ENCODE measurements at regions of chr6 and their contacts with region 1.

Region 1: DNA sequence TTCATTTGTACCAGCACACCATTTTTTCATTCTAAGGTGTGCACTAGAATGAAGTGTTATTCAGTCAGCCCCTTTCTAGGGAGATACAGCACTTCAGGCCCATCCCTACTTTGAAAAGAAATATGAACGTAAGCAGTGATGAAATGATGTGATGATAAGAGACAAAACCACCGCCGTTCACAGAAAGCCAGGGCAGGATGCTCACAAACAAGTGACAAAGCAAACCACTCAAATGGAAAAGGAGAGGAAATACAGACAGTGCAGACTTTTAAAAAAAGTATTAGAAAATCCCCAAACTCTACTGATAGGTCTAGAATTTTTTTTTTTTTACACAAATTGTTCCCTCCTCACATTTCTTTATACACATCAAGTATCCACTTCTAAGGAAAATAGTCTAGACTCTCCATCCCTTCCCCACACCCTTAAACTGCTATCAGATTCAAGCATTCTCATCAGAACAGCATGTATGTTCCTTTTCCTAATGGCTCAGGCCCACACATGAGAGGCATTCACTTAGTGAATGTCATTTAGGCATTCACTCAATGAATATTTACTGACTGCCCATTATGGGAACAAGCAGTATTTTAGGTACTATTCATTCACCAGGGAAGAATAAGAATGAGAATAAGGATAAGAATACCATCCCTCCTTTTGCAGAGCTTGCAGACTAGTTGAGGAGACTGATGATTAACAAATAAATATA is 243.5 kb downstream of the GMPR start:
- DNase-seq: peak; percentile 71
- H3K4me3 Mint-ChIP-seq: peak overlapping the region; percentile 38
- H3K27ac Mint-ChIP-seq: peak overlapping the region; percentile 98
- H3K4me1 Mint-ChIP-seq: peaks cover 89% of the 10 kb centered on the region
- H3K27me3 Mint-ChIP-seq: no peaks in the 10 kb centered on the region

Region 2: DNA sequence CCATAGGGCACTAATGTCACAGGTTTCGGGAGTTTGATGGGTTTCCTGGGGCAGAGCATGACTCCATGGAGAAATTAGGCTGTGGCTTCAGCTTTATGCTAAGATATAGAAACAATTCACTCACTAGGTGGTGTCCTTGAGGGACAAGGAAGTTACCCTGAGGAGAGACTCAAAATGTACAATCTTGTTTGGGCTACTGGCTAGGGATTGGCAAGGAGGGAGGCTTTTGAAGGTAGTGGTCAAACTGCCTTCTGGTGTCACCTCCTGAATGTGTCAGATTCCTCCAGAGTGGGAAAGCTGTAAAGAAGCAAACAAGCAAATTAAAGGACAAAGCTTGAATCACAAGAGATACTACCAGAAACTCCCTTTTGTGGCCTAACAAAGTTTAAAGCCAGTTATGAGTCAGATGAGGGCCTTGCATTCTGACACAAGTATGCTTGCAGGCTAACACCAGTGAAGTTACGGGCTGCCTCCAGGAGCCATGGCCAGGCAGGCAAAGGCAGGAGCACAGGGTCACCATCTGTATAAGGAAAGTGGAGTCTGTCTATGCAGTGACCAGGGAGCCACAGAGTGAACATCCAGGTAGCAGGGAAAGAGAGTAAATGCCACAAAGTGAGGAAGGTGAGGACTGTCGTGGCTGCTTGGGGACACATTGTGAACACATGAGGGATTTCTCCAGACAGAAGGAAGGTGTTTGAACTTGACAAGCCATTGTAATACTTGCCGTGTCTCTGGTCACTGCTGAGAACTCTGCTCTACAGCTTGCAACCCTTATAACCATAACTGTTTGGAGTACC is 711.3 kb before region 1 on chr6:
- intact Hi-C with region 1: loop called (anchors 10 kb)
- DNase-seq: peak; percentile 12
- H3K4me3 Mint-ChIP-seq: peak overlapping the region; percentile 65
- H3K27ac Mint-ChIP-seq: peak overlapping the region; percentile 98
- H3K4me1 Mint-ChIP-seq: peaks cover 59% of the 10 kb centered on the region
- H3K27me3 Mint-ChIP-seq: no peaks in the 10 kb centered on the region

Region 3: GRCh38 chr6:16420715-16421461 is 61.0 kb before region 1 on chr6:
- intact Hi-C with region 1: loop called (anchors 1 kb)
- DNase-seq: peak; percentile 48
- H3K4me3 Mint-ChIP-seq: peak overlapping the region; percentile 72
- H3K27ac Mint-ChIP-seq: peak overlapping the region; percentile 98
- H3K4me1 Mint-ChIP-seq: peaks cover 54% of the 10 kb centered on the region
- H3K27me3 Mint-ChIP-seq: no peaks in the 10 kb centered on the region

Region 4: GRCh38 chr6:16471222-16471909 is 10.5 kb before region 1 on chr6:
- intact Hi-C with region 1: loop called (anchors 1 kb)
- DNase-seq: no peak
- H3K4me3 Mint-ChIP-seq: peak overlapping the region; percentile 35
- H3K27ac Mint-ChIP-seq: peak overlapping the region; percentile 87
- H3K4me1 Mint-ChIP-seq: peaks cover 68% of the 10 kb centered on the region
- H3K27me3 Mint-ChIP-seq: no peaks in the 10 kb centered on the region

Region 5: GRCh38 chr6:16514249-16514648 is 32.4 kb after region 1 on chr6:
- intact Hi-C with region 1: loop called (anchors 2 kb)
- DNase-seq: peak; percentile 26
- H3K4me3 Mint-ChIP-seq: peak overlapping the region; percentile 49
- H3K27ac Mint-ChIP-seq: peak overlapping the region; percentile 75
- H3K4me1 Mint-ChIP-seq: peaks cover 76% of the 10 kb centered on the region
- H3K27me3 Mint-ChIP-seq: no peaks in the 10 kb centered on the region

Region 6: GRCh38 chr6:16540804-16541752 is 59.2 kb after region 1 on chr6:
- intact Hi-C with region 1: loop called (anchors 2 kb)
- DNase-seq: no peak
- H3K4me3 Mint-ChIP-seq: no peak overlapping the region
- H3K27ac Mint-ChIP-seq: peak overlapping the region; percentile 58
- H3K4me1 Mint-ChIP-seq: peaks cover 49% of the 10 kb centered on the region
- H3K27me3 Mint-ChIP-seq: no peaks in the 10 kb centered on the region

Region 7: DNA sequence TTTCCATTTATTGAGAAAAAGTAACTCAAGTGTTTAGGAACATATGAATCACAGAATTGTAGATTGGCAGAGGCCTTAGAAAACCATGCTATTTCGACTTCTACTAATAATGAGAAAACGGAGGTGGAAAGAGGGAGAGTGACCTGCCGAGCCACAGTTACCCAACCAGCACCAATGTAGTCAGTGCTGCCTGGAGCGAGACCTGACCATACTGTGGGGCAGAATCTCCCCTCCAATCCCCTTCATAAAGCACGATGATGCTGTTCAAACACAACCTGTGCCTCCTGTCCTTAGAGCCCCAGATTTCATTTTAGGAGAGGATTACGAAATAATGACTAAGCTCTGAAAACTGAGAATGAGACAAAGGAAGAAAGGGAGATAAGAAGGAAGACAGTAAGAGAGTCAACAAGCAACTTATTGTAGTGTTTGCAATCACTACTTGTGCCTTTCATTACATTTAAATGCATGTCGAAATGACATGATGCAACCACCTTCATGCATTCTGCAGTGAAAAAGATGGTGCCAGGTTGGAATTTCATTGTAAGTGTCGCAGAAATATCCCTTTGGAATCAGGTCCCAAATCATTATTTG is 208.9 kb after region 1 on chr6:
- intact Hi-C with region 1: loop called (anchors 2 kb)
- DNase-seq: no peak
- H3K4me3 Mint-ChIP-seq: peak overlapping the region; percentile 51
- H3K27ac Mint-ChIP-seq: peak overlapping the region; percentile 93
- H3K4me1 Mint-ChIP-seq: peaks cover 76% of the 10 kb centered on the region
- H3K27me3 Mint-ChIP-seq: no peaks in the 10 kb centered on the region

Region 8: DNA sequence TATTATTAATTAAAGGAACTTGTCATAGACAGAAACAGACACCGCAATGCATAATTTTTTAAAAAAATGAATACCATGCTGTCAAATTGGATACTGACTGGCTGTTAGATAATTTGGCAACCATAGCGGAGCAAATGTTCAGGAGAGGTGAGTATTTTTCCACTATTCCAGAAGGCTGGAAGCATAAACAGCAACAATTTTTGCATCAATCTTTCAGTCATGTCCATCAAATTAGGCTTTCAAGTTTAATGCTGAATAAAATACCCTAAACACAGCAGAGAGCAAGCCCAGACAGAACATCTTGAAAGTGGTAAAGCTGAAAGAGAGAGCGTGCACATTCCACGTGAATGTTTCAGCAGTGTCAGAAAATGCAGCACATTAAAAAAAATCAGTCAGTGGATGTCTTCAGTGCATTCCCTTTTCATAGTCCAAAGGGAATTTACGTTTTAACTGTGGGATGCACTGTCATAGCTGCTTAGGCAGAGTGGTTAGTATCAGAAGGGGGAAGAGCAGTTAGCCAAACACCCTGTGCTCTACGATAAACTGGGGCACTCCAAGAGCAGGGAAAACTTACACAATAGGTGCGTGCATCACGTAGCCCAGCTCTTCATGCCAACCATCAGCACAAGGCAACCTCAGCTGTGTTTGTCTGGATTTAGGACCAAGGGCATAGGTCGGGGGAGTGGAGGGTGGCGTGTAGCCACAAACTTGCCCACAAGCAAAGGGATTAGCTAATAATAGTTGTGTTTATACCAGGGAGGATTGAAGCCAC is 503.9 kb after region 1 on chr6:
- intact Hi-C with region 1: no loop called
- DNase-seq: no peak
- H3K4me3 Mint-ChIP-seq: no peak overlapping the region
- H3K27ac Mint-ChIP-seq: no peak overlapping the region
- H3K4me1 Mint-ChIP-seq: no peaks in the 10 kb centered on the region
- H3K27me3 Mint-ChIP-seq: peaks cover 42% of the 10 kb centered on the region

Measured in activated T-helper 2 cell treated with anti-CD3 and anti-CD28 coated beads, Interferon-gamma antibody, Interleukin-2, Interleukin-4, amounts not matched to agents 10 μg/mL and 5 μg/mL and 100 μg/mL, durations not matched to agents 14 hours and 24 hours and 36 hours (primary cell).